ENCODE measurements at regions of chr19 and their contacts with region 1.

Region 1: GRCh38 chr19:38004521-38005223 is 97.7 kb downstream of the SIPA1L3 start:
- DNase-seq: peak; percentile 95
- ATAC-seq: peak; percentile 87
- H3K4me3 ChIP-seq: peak overlapping the region; percentile 63
- H3K27ac ChIP-seq: peak overlapping the region; percentile 89
- H3K4me1 ChIP-seq: peaks cover 57% of the 10 kb centered on the region
- H3K27me3 ChIP-seq: no peaks in the 10 kb centered on the region
- CTCF ChIP-seq: no peak
- EP300 ChIP-seq: no peak
- POLR2A ChIP-seq: peak; percentile 80
- RAD21 ChIP-seq: no peak

Region 2: DNA sequence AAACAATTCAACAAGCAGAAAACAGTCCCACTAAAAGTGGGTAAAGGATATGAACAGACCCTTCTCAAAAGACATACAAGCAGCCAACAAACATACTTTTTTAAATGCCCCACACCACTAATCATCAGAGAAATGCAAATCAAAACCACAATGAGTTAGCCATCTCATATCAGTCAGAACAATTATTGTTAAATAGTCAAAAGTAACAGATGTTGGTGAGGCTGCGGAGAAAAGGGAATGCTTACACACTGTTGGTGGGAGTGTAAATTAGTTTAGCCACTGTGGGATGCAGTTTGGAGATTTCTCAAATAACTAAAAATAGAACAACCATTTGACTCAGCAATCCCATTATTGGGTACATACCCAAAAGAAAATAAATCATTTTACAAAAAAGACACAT is 1440.3 kb before region 1 on chr19:
- CTCF ChIA-PET with region 1: no interaction called
- POLR2A ChIA-PET with region 1: no interaction called
- RAD21 ChIA-PET with region 1: no interaction called
- SMC1A ChIA-PET with region 1: no interaction called
- in situ Hi-C with region 1: no loop called
- intact Hi-C with region 1: no loop called
- DNase-seq: no peak
- ATAC-seq: no peak
- H3K4me3 ChIP-seq: no peak overlapping the region
- H3K27ac ChIP-seq: no peak overlapping the region
- H3K4me1 ChIP-seq: no peaks in the 10 kb centered on the region
- H3K27me3 ChIP-seq: no peaks in the 10 kb centered on the region
- CTCF ChIP-seq: no peak
- EP300 ChIP-seq: no peak
- POLR2A ChIP-seq: no peak
- RAD21 ChIP-seq: no peak

Region 3: DNA sequence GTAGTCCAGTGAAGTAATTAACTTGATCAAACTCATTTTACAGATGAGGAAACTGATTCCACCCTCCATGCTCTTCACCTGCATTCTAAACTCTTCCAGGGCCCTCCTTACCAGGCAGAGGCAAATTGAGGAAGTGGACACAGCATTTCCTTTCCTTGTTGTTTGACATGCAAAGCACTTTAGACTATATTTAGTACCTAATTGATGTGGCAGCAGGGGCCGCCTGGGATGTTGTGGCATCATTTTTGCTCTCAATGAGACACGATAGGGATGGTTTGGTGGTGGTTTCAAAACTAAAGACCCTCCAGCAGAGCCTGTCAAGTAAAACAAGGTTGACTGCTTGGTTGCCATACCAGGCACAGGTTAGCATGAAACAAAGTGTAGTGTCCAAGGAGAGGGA is 89.8 kb before region 1 on chr19:
- CTCF ChIA-PET with region 1: interaction called, 3 read pairs
- POLR2A ChIA-PET with region 1: interaction called, 12 read pairs
- RAD21 ChIA-PET with region 1: interaction called, 14 read pairs
- SMC1A ChIA-PET with region 1: interaction called, 16 read pairs
- in situ Hi-C with region 1: no loop called
- intact Hi-C with region 1: no loop called
- DNase-seq: peak; percentile 77
- ATAC-seq: peak; percentile 70
- H3K4me3 ChIP-seq: peak overlapping the region; percentile 77
- H3K27ac ChIP-seq: peak overlapping the region; percentile 87
- H3K4me1 ChIP-seq: peaks cover 42% of the 10 kb centered on the region
- H3K27me3 ChIP-seq: no peaks in the 10 kb centered on the region
- CTCF ChIP-seq: no peak
- EP300 ChIP-seq: peak in 1 of 2 experiments; percentile 67; a peak in 2 of 4 replicates
- POLR2A ChIP-seq: peak; percentile 44; the same call in 1 of the 2 replicates
- RAD21 ChIP-seq: no peak

Region 4: DNA sequence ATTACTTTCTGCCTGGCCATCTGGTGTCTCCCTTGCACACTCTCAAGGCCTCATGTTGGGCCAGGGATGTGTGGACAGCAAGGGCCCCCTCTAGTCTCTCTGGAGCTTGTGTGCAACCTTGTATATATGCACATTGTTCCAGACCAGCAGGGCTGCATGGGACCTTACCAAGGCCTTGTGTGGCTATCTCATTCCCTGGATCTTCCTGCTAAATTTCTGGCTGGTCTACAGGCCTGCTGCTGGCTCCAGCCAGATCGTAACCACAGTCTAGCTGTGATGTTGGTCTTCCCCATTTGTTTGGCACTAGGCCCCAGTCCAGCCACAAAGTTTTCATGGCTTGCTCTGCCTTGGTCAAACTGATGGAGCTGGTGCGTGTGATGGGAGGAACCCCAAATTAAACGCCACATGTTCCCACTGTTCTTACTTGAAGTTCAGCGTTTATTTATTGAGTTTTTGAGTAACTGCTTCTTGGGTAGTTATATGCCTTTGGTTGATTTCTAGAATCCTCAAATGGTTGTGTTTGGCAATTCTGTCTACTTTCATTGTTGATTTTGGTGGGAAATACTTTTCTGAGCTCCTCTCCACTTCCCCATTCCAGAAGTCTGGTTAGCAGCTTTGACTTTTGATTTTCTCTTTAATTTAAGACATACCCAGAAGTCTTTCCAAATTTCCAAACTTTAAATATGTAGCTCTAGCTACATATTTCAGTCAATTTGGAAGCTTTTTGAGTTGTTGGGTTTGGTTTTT is 41.3 kb before region 1 on chr19:
- CTCF ChIA-PET with region 1: interaction called, 16 read pairs
- POLR2A ChIA-PET with region 1: interaction called, 6 read pairs
- RAD21 ChIA-PET with region 1: interaction called, 18 read pairs
- SMC1A ChIA-PET with region 1: interaction called, 28 read pairs
- in situ Hi-C with region 1: no loop called
- intact Hi-C with region 1: no loop called
- DNase-seq: no peak
- ATAC-seq: peak; percentile 59
- H3K4me3 ChIP-seq: no peak overlapping the region
- H3K27ac ChIP-seq: peak overlapping the region; percentile 45
- H3K4me1 ChIP-seq: peaks cover 45% of the 10 kb centered on the region
- H3K27me3 ChIP-seq: no peaks in the 10 kb centered on the region
- CTCF ChIP-seq: peak in 1 of 3 experiments; percentile 9; a peak in 1 of 6 replicates
- EP300 ChIP-seq: no peak
- POLR2A ChIP-seq: no peak
- RAD21 ChIP-seq: no peak

Region 5: GRCh38 chr19:37987356-37988332 is 17.0 kb before region 1 on chr19:
- CTCF ChIA-PET with region 1: interaction called, 15 read pairs
- POLR2A ChIA-PET with region 1: interaction called, 27 read pairs
- RAD21 ChIA-PET with region 1: interaction called, 59 read pairs
- SMC1A ChIA-PET with region 1: interaction called, 47 read pairs
- in situ Hi-C with region 1: no loop called
- intact Hi-C with region 1: no loop called
- DNase-seq: no peak
- ATAC-seq: peak; percentile 77
- H3K4me3 ChIP-seq: no peak overlapping the region
- H3K27ac ChIP-seq: peak overlapping the region; percentile 86
- H3K4me1 ChIP-seq: peaks cover 34% of the 10 kb centered on the region
- H3K27me3 ChIP-seq: no peaks in the 10 kb centered on the region
- CTCF ChIP-seq: peak; percentile 26 to 58 (median 39); a peak in 4 of 6 replicates
- EP300 ChIP-seq: no peak
- POLR2A ChIP-seq: no peak
- RAD21 ChIP-seq: peak; percentile 54

Region 6: GRCh38 chr19:38042132-38042531 is 37.5 kb after region 1 on chr19:
- CTCF ChIA-PET with region 1: interaction called, 7 read pairs
- POLR2A ChIA-PET with region 1: interaction called, 36 read pairs
- RAD21 ChIA-PET with region 1: interaction called, 122 read pairs
- SMC1A ChIA-PET with region 1: interaction called, 102 read pairs
- in situ Hi-C with region 1: no loop called
- intact Hi-C with region 1: no loop called
- DNase-seq: no peak
- ATAC-seq: no peak
- H3K4me3 ChIP-seq: no peak overlapping the region
- H3K27ac ChIP-seq: no peak overlapping the region
- H3K4me1 ChIP-seq: peaks cover 34% of the 10 kb centered on the region
- H3K27me3 ChIP-seq: no peaks in the 10 kb centered on the region
- CTCF ChIP-seq: no peak
- EP300 ChIP-seq: no peak
- POLR2A ChIP-seq: no peak
- RAD21 ChIP-seq: no peak